ENCODE measurements at regions of chr5 and their contacts with region 1.

Region 1: DNA sequence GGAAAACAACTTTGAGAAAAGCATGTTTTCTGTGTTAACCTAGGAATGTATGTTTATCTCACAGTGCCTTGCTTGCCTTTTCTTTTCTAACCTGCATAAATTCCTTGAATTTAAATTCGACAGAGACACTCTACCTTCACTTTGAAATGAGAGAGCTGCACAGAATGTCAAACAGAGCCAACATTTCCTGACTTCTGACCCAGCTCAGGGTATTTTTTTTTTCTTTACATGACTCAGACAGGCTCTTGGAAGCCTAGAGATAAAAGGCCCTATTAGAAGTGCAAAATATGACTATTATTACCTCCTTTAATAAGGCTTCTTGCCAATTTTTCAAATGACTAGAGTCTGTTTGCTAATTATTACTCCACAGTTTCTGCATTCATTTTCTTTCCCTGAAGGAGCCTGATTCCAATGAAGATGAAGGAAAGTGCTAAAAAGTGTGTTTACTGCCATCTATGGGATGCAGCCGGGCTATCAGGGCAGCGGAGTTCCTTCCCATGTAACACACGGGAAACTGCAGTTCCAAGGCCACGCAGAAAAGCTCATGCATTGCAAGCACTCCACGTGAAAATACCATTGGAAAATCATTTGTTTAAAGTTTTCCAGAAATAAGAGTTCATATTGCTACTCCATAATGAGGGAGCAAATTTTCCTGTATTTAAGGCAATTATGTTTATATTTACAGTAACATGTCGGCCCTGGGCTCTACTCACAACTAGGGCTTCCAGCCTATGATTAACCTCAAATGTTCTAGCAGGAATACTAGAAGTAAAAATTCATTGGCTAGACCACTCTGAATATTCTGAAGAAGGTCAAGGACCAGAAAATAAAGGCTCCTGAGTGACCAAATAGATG is 485.6 kb downstream of the ZSWIM6 start:
- DNase-seq: peak; percentile 37 to 83 (median 67)
- H3K4me3 ChIP-seq: no peak overlapping the region
- H3K27ac ChIP-seq: no peak overlapping the region
- H3K4me1 ChIP-seq: peaks cover 0 to 16% of the 10 kb centered on the region in 2 donors
- H3K27me3 ChIP-seq: no peaks in the 10 kb centered on the region
- CTCF ChIP-seq: peak; percentile 43 to 65 (median 54)
- POLR2A ChIP-seq: no peak

Region 2: GRCh38 chr5:61673007-61673735 is 144.5 kb before region 1 on chr5:
- intact Hi-C with region 1: loop called in 1 of 2 experiments (anchors 10 kb)
- DNase-seq: peak in 6 of 7 donors; percentile 31 to 65 (median 40)
- H3K4me3 ChIP-seq: no peak overlapping the region
- H3K27ac ChIP-seq: peak overlapping the region in 1 of 5 donors; percentile 36
- H3K4me1 ChIP-seq: peaks cover 0 to under 1% of the 10 kb centered on the region in 2 donors
- H3K27me3 ChIP-seq: no peaks in the 10 kb centered on the region
- CTCF ChIP-seq: no peak
- POLR2A ChIP-seq: no peak

Region 3: DNA sequence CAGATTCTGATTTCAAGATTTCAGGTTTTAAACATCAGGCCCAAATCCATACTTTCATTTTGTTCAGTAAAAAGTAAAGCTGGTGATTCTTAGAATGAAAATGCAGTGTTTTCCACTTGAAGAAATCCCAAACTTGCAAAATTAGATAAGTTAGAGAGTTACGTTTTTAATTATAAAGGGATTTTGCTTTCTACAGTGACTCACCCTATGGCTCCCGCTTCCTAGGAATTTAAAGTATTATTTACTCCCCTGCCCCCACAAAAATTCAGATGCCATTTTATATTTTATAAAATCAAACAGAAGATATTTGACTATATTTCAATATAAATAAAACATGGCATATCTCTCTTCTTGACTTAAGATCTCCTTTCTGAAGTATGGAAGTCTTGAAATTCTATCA is 82.7 kb before region 1 on chr5:
- intact Hi-C with region 1: no loop called
- DNase-seq: no peak
- H3K4me3 ChIP-seq: no peak overlapping the region
- H3K27ac ChIP-seq: no peak overlapping the region
- H3K4me1 ChIP-seq: peaks cover 0 to 16% of the 10 kb centered on the region in 2 donors
- H3K27me3 ChIP-seq: no peaks in the 10 kb centered on the region
- CTCF ChIP-seq: no peak
- POLR2A ChIP-seq: no peak

Region 4: DNA sequence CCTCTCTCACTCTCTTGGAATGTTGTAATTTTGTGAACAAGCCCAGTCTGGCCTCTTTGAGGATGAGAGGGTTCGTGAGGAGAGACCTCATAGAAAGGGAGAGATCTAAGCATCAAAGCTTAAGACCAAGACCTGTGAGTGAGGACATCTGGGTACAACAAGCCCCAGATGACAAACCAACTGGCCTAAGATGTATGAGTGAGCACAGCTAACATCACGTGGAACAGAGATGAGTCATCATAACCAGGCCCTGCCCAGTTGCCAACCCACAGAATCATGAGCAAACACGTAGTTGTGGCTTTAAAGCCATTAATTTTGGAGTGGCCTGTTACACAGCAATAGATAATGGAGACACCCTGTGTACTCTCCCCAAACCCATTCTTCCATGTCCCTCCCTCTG is 49.2 kb after region 1 on chr5:
- intact Hi-C with region 1: no loop called
- DNase-seq: peak in 2 of 7 donors; percentile 2 to 8
- H3K4me3 ChIP-seq: no peak overlapping the region
- H3K27ac ChIP-seq: no peak overlapping the region
- H3K4me1 ChIP-seq: no peaks in the 10 kb centered on the region
- H3K27me3 ChIP-seq: no peaks in the 10 kb centered on the region
- CTCF ChIP-seq: no peak
- POLR2A ChIP-seq: no peak

Measured in adrenal gland (tissue), 19 donors.